CD8-positive, alpha-beta T cell (primary cell): ENCODE measurements at regions of chr11 and their contacts with region 1.

Region 1: DNA sequence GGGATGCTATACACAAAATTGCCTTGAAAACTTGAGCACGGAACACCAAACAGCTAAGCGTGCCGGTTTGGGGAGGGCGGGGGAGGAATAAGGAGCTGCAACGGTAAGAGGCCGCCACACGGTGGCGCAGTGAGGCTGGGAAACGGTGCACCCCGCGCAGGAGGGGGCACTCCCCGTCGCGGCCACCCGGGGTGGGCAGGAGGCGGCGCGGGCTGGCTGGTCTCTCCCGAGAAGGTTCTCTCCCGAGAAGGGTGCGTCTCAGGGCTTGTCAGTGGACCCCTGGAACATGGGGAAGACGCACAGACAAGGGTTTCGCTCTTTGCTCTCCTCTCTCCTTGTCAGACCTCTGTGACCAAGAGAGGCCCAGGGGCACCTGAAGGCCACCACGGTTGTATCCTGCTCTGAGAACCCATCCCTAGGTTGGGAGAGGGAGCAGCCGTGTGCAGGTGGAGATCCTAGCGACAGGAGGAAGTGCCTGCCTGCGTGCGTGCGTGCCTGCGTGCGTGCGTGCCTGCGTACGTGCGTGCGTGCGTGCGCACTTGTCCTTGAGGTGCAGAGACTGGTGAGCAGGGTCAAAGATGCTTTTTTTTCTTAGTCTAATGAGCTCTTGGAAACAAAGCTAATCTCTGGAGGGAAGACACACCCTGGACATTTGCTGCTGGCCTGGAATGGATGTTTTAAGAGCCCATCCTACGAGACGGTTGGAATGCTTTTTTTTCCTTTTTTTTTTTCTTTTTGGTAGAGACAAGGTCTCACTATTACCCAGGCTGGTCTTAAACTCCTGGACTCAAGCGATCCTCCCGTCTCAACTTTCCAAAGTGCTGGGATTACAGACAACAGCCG is 18.1 kb upstream of the JAM3 start:
- DNase-seq: peak; percentile 47 to 86 (median 77)
- ATAC-seq: peak; percentile 99
- H3K4me3 ChIP-seq: no peak overlapping the region
- H3K4me3 Mint-ChIP-seq: no peak overlapping the region
- H3K27ac ChIP-seq: no peak overlapping the region
- H3K27ac Mint-ChIP-seq: no peak overlapping the region
- H3K4me1 ChIP-seq: peaks cover 9% of the 10 kb centered on the region
- H3K4me1 Mint-ChIP-seq: peaks cover 5% of the 10 kb centered on the region
- H3K27me3 ChIP-seq: peaks cover 0 to 6% of the 10 kb centered on the region in 2 experiments
- H3K27me3 Mint-ChIP-seq: peaks cover 13% of the 10 kb centered on the region
- CTCF ChIP-seq: peak; percentile 91

Region 2: GRCh38 chr11:133947321-133947756 is 103.4 kb before region 1 on chr11:
- CTCF ChIA-PET with region 1: interaction called, 11 read pairs
- POLR2A ChIA-PET with region 1: no interaction called
- intact Hi-C with region 1: no loop called
- DNase-seq: peak; percentile 41 to 81 (median 68)
- ATAC-seq: peak; percentile 32
- H3K4me3 ChIP-seq: peak overlapping the region in 1 of 2 experiments; percentile 7
- H3K4me3 Mint-ChIP-seq: peak overlapping the region; percentile 60
- H3K27ac ChIP-seq: no peak overlapping the region
- H3K27ac Mint-ChIP-seq: peak overlapping the region; percentile 79
- H3K4me1 ChIP-seq: peaks cover 58% of the 10 kb centered on the region
- H3K4me1 Mint-ChIP-seq: peaks cover 51% of the 10 kb centered on the region
- H3K27me3 ChIP-seq: peaks cover 0 to 10% of the 10 kb centered on the region in 2 experiments
- H3K27me3 Mint-ChIP-seq: no peaks in the 10 kb centered on the region
- CTCF ChIP-seq: peak; percentile 24

Region 3: DNA sequence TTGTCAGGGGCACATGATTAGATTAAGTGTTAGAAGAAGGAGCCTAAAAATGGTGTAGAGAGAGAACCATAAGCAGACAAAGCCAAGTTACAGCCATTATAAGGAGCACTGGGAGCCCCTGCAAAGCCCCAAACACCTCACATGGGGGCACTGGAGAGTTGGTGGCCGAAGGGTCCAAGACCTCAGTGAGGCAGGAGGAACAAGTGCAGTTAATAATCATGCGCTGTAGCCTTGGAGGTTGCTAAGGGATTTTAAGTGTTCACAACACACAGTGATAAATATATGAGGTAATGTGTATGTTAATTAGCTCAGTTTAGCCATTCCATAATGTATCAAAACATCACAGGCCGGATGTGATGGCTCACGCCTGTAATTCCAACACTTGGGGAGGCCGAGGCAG is 36.3 kb before region 1 on chr11:
- CTCF ChIA-PET with region 1: interaction called, 11 read pairs
- POLR2A ChIA-PET with region 1: no interaction called
- intact Hi-C with region 1: loop called in 1 of 2 experiments (anchors 1 kb)
- DNase-seq: peak in 1 of 9 experiments; percentile 13
- ATAC-seq: no peak
- H3K4me3 ChIP-seq: no peak overlapping the region
- H3K4me3 Mint-ChIP-seq: no peak overlapping the region
- H3K27ac ChIP-seq: no peak overlapping the region
- H3K27ac Mint-ChIP-seq: no peak overlapping the region
- H3K4me1 ChIP-seq: no peaks in the 10 kb centered on the region
- H3K4me1 Mint-ChIP-seq: no peaks in the 10 kb centered on the region
- H3K27me3 ChIP-seq: no peaks in the 10 kb centered on the region
- H3K27me3 Mint-ChIP-seq: no peaks in the 10 kb centered on the region
- CTCF ChIP-seq: no peak

Region 4: DNA sequence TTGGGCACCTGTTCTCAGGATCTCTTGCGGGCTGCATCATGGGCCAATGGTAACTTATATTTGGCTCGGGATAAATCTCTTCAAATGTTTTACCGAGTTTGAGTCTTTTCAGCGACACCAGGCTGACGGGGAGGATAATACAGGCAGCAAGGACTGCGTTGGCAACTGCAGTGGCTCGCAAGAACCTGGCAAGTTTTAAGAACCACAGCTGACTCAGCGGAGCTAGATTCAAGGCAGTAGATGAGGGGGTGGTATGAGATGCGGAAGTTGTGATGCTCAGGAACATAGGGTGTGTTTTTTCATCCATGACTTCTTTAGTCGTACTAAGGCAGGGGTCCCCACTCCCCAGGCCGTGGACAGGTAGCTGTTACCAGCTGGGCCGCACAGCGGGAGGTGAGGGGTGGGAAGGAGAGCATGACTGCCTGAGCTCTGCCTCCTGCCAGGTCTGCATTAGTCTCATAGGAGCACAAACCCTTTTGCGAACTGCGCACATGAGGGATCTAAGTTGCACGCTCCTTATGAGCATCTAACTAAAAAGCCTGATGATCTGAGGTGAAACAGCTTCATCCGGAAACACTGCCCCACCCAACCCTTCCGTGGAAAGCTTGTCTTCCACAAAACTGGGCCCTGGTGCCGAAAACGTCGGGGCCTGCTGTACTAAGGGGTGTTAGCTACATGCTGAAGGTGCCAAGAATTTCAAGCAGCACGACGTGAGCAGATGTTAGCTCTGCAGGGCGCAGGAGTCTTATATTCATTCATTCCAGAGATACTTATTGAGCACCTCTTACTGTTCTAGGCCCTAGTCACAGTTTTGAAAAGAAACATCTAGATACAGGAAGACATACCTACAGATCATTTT is 11.7 kb after region 1 on chr11:
- CTCF ChIA-PET with region 1: interaction called, 10 read pairs
- POLR2A ChIA-PET with region 1: no interaction called
- intact Hi-C with region 1: no loop called
- DNase-seq: no peak
- ATAC-seq: no peak
- H3K4me3 ChIP-seq: no peak overlapping the region
- H3K4me3 Mint-ChIP-seq: no peak overlapping the region
- H3K27ac ChIP-seq: no peak overlapping the region
- H3K27ac Mint-ChIP-seq: no peak overlapping the region
- H3K4me1 ChIP-seq: peaks cover 7% of the 10 kb centered on the region
- H3K4me1 Mint-ChIP-seq: peaks cover 8% of the 10 kb centered on the region
- H3K27me3 ChIP-seq: no peaks in the 10 kb centered on the region
- H3K27me3 Mint-ChIP-seq: peaks cover 24% of the 10 kb centered on the region
- CTCF ChIP-seq: no peak

Region 5: GRCh38 chr11:134098566-134099184 is 47.9 kb after region 1 on chr11:
- CTCF ChIA-PET with region 1: interaction called, 5 read pairs
- POLR2A ChIA-PET with region 1: no interaction called
- intact Hi-C with region 1: loop called (anchors 2 kb)
- DNase-seq: peak in 2 of 9 experiments; percentile 30 to 48
- ATAC-seq: peak; percentile 48
- H3K4me3 ChIP-seq: no peak overlapping the region
- H3K4me3 Mint-ChIP-seq: no peak overlapping the region
- H3K27ac ChIP-seq: no peak overlapping the region
- H3K27ac Mint-ChIP-seq: no peak overlapping the region
- H3K4me1 ChIP-seq: no peaks in the 10 kb centered on the region
- H3K4me1 Mint-ChIP-seq: peaks cover 3% of the 10 kb centered on the region
- H3K27me3 ChIP-seq: no peaks in the 10 kb centered on the region
- H3K27me3 Mint-ChIP-seq: no peaks in the 10 kb centered on the region
- CTCF ChIP-seq: no peak

Region 6: GRCh38 chr11:134350381-134350780 is 299.6 kb after region 1 on chr11:
- CTCF ChIA-PET with region 1: no interaction called
- POLR2A ChIA-PET with region 1: no interaction called
- intact Hi-C with region 1: no loop called
- DNase-seq: peak in 1 of 9 experiments; percentile 16
- ATAC-seq: no peak
- H3K4me3 ChIP-seq: no peak overlapping the region
- H3K4me3 Mint-ChIP-seq: no peak overlapping the region
- H3K27ac ChIP-seq: peak overlapping the region; percentile 38 to 81
- H3K27ac Mint-ChIP-seq: peak overlapping the region; percentile 15
- H3K4me1 ChIP-seq: peaks cover 14% of the 10 kb centered on the region
- H3K4me1 Mint-ChIP-seq: peaks cover 13% of the 10 kb centered on the region
- H3K27me3 ChIP-seq: no peaks in the 10 kb centered on the region
- H3K27me3 Mint-ChIP-seq: no peaks in the 10 kb centered on the region
- CTCF ChIP-seq: no peak